CD8-positive, alpha-beta T cell (primary cell): ENCODE measurements at regions of chr9 and their contacts with region 1.

Region 1: DNA sequence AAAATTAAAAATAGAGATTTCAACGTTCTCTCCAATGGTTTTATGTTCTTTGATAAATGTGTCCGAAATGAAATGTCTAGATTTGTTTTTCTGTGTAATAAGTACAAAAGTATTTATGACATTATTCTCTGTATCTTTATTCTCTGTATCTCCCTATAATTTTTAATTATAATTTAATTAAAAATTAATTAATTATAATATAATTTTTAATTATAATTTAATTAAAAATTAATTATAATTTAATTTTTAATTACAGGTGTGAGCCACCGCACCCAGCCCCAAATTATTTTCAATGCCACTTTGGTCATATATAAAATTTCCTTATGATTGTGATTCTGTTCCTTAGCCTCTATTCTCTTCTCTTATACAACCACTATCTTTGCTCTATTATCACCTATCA is 28.2 kb downstream of the SPATA31C2 start:
- DNase-seq: no peak
- ATAC-seq: no peak
- H3K4me3 ChIP-seq: no peak overlapping the region
- H3K4me3 Mint-ChIP-seq: no peak overlapping the region
- H3K27ac ChIP-seq: no peak overlapping the region
- H3K27ac Mint-ChIP-seq: no peak overlapping the region
- H3K4me1 ChIP-seq: no peaks in the 10 kb centered on the region
- H3K4me1 Mint-ChIP-seq: no peaks in the 10 kb centered on the region
- H3K27me3 ChIP-seq: no peaks in the 10 kb centered on the region
- H3K27me3 Mint-ChIP-seq: peaks cover 14% of the 10 kb centered on the region
- CTCF ChIP-seq: no peak

Region 2: GRCh38 chr9:87944682-87945081 is 165.3 kb before region 1 on chr9:
- CTCF ChIA-PET with region 1: no interaction called
- POLR2A ChIA-PET with region 1: no interaction called
- intact Hi-C with region 1: loop called in 1 of 2 experiments (anchors 5 kb)
- DNase-seq: no peak
- ATAC-seq: no peak
- H3K4me3 ChIP-seq: no peak overlapping the region
- H3K4me3 Mint-ChIP-seq: no peak overlapping the region
- H3K27ac ChIP-seq: no peak overlapping the region
- H3K27ac Mint-ChIP-seq: no peak overlapping the region
- H3K4me1 ChIP-seq: no peaks in the 10 kb centered on the region
- H3K4me1 Mint-ChIP-seq: peaks cover 8% of the 10 kb centered on the region
- H3K27me3 ChIP-seq: no peaks in the 10 kb centered on the region
- H3K27me3 Mint-ChIP-seq: peaks cover 47% of the 10 kb centered on the region
- CTCF ChIP-seq: no peak

Region 3: GRCh38 chr9:88098232-88098631 is 11.8 kb before region 1 on chr9:
- CTCF ChIA-PET with region 1: no interaction called
- POLR2A ChIA-PET with region 1: no interaction called
- intact Hi-C with region 1: no loop called
- DNase-seq: no peak
- ATAC-seq: no peak
- H3K4me3 ChIP-seq: no peak overlapping the region
- H3K4me3 Mint-ChIP-seq: no peak overlapping the region
- H3K27ac ChIP-seq: no peak overlapping the region
- H3K27ac Mint-ChIP-seq: no peak overlapping the region
- H3K4me1 ChIP-seq: no peaks in the 10 kb centered on the region
- H3K4me1 Mint-ChIP-seq: no peaks in the 10 kb centered on the region
- H3K27me3 ChIP-seq: no peaks in the 10 kb centered on the region
- H3K27me3 Mint-ChIP-seq: peaks cover 6% of the 10 kb centered on the region
- CTCF ChIP-seq: no peak

Region 4: GRCh38 chr9:88258027-88258426 is 148.0 kb after region 1 on chr9:
- CTCF ChIA-PET with region 1: no interaction called
- POLR2A ChIA-PET with region 1: no interaction called
- intact Hi-C with region 1: no loop called
- DNase-seq: no peak
- ATAC-seq: no peak
- H3K4me3 ChIP-seq: no peak overlapping the region
- H3K4me3 Mint-ChIP-seq: no peak overlapping the region
- H3K27ac ChIP-seq: no peak overlapping the region
- H3K27ac Mint-ChIP-seq: no peak overlapping the region
- H3K4me1 ChIP-seq: no peaks in the 10 kb centered on the region
- H3K4me1 Mint-ChIP-seq: peaks cover 4% of the 10 kb centered on the region
- H3K27me3 ChIP-seq: no peaks in the 10 kb centered on the region
- H3K27me3 Mint-ChIP-seq: peaks cover 4% of the 10 kb centered on the region
- CTCF ChIP-seq: no peak